GM12878 (cell line): ENCODE measurements at regions of chr6 and their contacts with region 1.

Region 1: GRCh38 chr6:159042003-159042825 is 2.6 kb downstream of the TAGAP start:
- DNase-seq: peak; percentile 69
- ATAC-seq: peak; percentile 53
- H3K4me3 ChIP-seq: 0 out of 2 replicates have a peak overlapping the region, but pooled peaks have one; percentile 60
- H3K27ac ChIP-seq: peak overlapping the region; percentile 59
- H3K4me1 ChIP-seq: peaks cover 43% of the 10 kb centered on the region
- H3K27me3 ChIP-seq: no peaks in the 10 kb centered on the region
- CTCF ChIP-seq: peak; percentile 94 to 99 (median 96)
- EP300 ChIP-seq: 0 out of 4 replicates have a peak, but pooled peaks of 1 of the 2 experiments have one; percentile 23
- POLR2A ChIP-seq: no peak
- RAD21 ChIP-seq: peak; percentile 92

Region 2: DNA sequence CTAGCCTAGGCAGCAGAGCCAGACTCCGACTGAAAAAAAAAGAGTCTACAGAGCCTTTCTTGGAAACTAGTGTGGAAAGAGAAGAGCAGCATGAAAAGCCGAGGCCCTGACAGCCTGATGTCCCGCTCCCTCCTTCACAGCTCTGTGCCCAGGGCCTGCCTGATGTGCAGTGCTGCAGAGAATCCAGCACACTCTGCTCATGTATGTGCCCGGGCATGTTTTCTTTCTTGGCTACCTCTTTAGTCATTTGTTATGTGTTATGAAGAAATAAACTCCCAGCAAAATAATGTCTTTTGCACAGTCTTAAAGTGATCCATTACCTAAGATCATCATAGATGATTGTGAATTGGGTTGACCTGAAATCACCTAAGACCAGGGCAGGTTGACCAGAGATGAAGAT is 145.0 kb before region 1 on chr6:
- CTCF ChIA-PET with region 1: no interaction called
- POLR2A ChIA-PET with region 1: no interaction called
- RAD21 ChIA-PET with region 1: no interaction called
- SMC1A ChIA-PET with region 1: no interaction called
- in situ Hi-C with region 1: no loop called
- intact Hi-C with region 1: no loop called
- DNase-seq: no peak
- ATAC-seq: no peak
- H3K4me3 ChIP-seq: no peak overlapping the region
- H3K27ac ChIP-seq: no peak overlapping the region
- H3K4me1 ChIP-seq: no peaks in the 10 kb centered on the region
- H3K27me3 ChIP-seq: no peaks in the 10 kb centered on the region
- CTCF ChIP-seq: no peak
- EP300 ChIP-seq: no peak
- POLR2A ChIP-seq: no peak
- RAD21 ChIP-seq: no peak

Region 3: DNA sequence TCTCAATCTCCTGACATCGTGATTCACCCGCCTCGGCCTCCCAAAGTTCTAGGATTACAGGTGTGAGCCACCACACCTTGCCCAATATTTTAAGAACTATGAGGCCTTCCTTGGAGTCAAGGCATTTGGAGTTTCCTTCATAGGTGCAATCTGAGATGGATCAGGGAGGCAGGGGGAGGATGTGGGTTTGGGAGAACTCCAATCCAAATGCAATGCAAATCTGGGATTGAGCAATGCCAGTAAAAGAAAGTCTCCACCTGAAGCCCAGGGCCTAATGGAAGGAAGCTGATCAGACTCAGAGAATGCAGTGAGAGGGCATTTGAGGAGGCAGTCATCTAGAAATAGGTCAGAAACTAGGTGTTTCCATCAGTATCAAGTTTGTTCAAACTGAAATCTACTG is 63.5 kb before region 1 on chr6:
- CTCF ChIA-PET with region 1: no interaction called
- POLR2A ChIA-PET with region 1: no interaction called
- RAD21 ChIA-PET with region 1: no interaction called
- SMC1A ChIA-PET with region 1: no interaction called
- in situ Hi-C with region 1: no loop called
- intact Hi-C with region 1: no loop called
- DNase-seq: no peak
- ATAC-seq: no peak
- H3K4me3 ChIP-seq: no peak overlapping the region
- H3K27ac ChIP-seq: no peak overlapping the region
- H3K4me1 ChIP-seq: no peaks in the 10 kb centered on the region
- H3K27me3 ChIP-seq: no peaks in the 10 kb centered on the region
- CTCF ChIP-seq: no peak
- EP300 ChIP-seq: no peak
- POLR2A ChIP-seq: no peak
- RAD21 ChIP-seq: no peak

Region 4: DNA sequence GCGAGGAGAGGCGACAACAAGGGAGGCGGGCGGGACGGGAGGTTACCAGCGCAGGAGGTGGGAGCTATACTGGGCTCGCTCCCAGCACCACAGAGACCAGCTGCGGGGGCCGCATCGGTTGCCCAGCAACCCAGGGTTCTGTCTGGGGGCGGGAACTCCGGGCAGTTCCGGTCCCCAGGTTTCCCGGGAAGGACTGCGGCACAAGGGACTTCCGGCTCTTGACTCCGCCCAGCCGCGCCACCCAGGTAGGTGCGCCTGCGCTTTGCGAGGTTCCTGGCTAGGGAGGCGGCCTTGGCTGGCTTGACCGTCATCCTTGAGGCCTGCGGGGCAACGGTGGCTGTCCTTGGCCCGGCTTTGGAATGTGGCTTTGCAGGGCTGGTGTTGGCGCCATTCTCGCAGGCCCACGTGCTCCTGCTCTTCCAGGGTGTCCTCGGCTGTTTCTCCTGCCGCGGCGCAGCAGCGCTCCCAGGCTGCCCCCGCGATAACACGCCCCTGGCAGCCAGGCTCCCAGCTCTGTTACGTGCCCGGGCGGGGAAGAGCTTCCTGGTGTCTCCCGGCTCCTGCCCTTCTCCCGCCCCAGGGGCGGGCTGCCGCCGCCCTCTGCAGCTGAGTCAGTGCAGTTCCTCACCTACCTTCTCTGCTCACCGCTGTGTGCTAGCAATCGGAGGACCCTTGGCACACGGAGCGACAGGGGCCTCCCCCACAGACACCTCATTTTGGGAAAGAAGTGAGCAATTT is 42.4 kb before region 1 on chr6 and contains the start of gene RSPH3:
- CTCF ChIA-PET with region 1: interaction called, 19 read pairs
- POLR2A ChIA-PET with region 1: interaction called, 14 read pairs
- RAD21 ChIA-PET with region 1: interaction called, 13 read pairs
- SMC1A ChIA-PET with region 1: interaction called, 9 read pairs
- in situ Hi-C with region 1: no loop called
- intact Hi-C with region 1: no loop called
- DNase-seq: peak; percentile 77
- ATAC-seq: peak; percentile 96
- H3K4me3 ChIP-seq: peak within 1 kb of the TSS; percentile 81
- H3K27ac ChIP-seq: peak within 1 kb of the TSS; percentile 87
- H3K4me1 ChIP-seq: peaks cover 3% of the 10 kb centered on the region; the same call in 1 of the 2 replicates
- H3K27me3 ChIP-seq: no peaks in the 10 kb centered on the region
- CTCF ChIP-seq: peak in 1 of 3 experiments; percentile 34; a peak in 2 of 6 replicates
- EP300 ChIP-seq: no peak
- POLR2A ChIP-seq: peak; percentile 98
- RAD21 ChIP-seq: peak; percentile 21; the same call in 1 of the 2 replicates
- polyA plus RNA-seq, gene RSPH3: 0.40 to 0.51 TPM

Region 5: DNA sequence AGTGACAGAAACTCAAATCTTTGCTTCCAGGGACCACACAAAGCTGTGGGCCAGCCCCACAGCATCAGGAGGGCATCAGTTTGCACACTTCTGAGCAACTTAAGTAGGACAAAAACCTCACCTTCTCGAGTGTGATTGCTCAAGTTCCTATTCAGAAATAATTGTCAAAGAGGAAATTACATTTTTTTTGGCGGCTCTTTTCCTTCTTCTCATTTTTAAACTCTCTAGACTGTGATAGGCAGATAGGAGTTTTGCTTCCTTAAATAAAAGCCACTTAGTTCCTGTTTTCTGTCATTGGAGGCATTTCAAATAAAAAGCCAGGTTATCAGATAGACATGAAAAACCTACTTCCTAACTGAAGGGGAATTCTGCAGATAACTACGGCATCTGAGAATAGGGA is 13.8 kb after region 1 on chr6:
- CTCF ChIA-PET with region 1: interaction called, 15 read pairs
- POLR2A ChIA-PET with region 1: interaction called, 22 read pairs
- RAD21 ChIA-PET with region 1: interaction called, 26 read pairs
- SMC1A ChIA-PET with region 1: interaction called, 24 read pairs
- in situ Hi-C with region 1: no loop called
- intact Hi-C with region 1: no loop called
- DNase-seq: no peak
- ATAC-seq: peak; percentile 66
- H3K4me3 ChIP-seq: no peak overlapping the region
- H3K27ac ChIP-seq: no peak overlapping the region
- H3K4me1 ChIP-seq: peaks cover 10% of the 10 kb centered on the region
- H3K27me3 ChIP-seq: no peaks in the 10 kb centered on the region
- CTCF ChIP-seq: no peak
- EP300 ChIP-seq: no peak
- POLR2A ChIP-seq: no peak
- RAD21 ChIP-seq: no peak

Region 6: DNA sequence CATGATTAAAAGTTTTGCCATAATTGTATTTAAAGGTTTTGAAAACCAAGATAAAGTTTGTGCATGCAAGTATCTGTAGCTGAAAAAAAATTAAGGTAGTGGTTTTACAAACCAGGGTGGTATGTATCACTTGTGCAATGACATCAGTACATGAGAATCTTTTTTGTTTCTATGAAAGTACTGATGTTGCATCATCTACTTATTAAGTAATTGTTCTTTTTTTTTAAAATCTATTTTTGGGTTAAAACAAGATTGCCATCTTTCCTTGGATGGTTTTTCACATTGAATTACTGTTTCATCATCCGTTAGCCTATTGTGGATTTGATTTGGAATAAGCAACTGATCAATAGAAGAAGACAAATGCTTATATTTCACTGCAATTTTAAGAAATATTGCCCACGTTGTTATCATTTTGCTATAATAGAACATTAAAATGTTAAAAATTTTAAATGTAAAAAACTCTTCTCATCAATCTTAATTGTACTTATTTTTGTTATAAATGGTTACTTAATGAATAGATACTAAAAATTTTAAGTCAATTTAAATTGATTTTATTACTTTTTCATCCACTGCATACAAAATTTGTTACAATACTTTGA is 42.4 kb after region 1 on chr6:
- CTCF ChIA-PET with region 1: interaction called, 16 read pairs
- POLR2A ChIA-PET with region 1: interaction called, 6 read pairs
- RAD21 ChIA-PET with region 1: interaction called, 18 read pairs
- SMC1A ChIA-PET with region 1: interaction called, 86 read pairs
- in situ Hi-C with region 1: no loop called
- intact Hi-C with region 1: no loop called
- DNase-seq: no peak
- ATAC-seq: peak; percentile 46; the same call in 2 of the 3 replicates
- H3K4me3 ChIP-seq: no peak overlapping the region
- H3K27ac ChIP-seq: no peak overlapping the region
- H3K4me1 ChIP-seq: peaks cover 4% of the 10 kb centered on the region; the same call in 1 of the 2 replicates
- H3K27me3 ChIP-seq: no peaks in the 10 kb centered on the region
- CTCF ChIP-seq: no peak
- EP300 ChIP-seq: no peak
- POLR2A ChIP-seq: no peak
- RAD21 ChIP-seq: no peak

Region 7: DNA sequence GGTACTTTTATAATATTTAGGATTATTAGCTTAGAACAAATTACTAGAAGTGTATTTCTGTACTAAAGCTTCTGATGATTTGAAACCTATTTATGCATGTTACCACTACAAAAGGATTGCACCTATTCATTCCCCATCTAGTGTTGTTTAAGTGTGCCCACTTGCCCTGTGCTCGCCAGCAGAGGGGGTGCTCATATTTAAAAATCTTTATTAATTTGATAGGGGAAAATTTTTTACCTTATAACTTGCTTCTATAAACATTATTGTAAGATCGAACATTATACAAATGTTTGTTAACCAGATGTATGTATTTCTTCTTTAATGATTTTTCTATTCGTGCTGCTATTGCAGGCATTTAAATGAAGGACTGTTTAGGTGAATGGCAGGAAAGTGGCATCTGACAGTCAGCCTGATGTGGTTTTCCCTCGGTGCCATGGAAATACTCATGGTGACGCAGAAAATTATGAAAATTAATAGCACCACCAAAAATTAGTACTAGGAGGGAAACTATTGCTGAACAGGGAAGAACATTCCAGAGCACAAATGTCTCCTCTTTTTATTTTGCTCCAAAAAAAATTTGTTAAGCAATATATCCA is 82.9 kb after region 1 on chr6:
- CTCF ChIA-PET with region 1: interaction called, 14 read pairs
- POLR2A ChIA-PET with region 1: interaction called, 17 read pairs
- RAD21 ChIA-PET with region 1: interaction called, 16 read pairs
- SMC1A ChIA-PET with region 1: interaction called, 28 read pairs
- in situ Hi-C with region 1: no loop called
- intact Hi-C with region 1: no loop called
- DNase-seq: no peak
- ATAC-seq: no peak
- H3K4me3 ChIP-seq: no peak overlapping the region
- H3K27ac ChIP-seq: no peak overlapping the region
- H3K4me1 ChIP-seq: peaks cover 19% of the 10 kb centered on the region
- H3K27me3 ChIP-seq: peaks cover 0 to 3% of the 10 kb centered on the region in 2 experiments; a peak in 1 of 4 replicates
- CTCF ChIP-seq: 0 out of 6 replicates have a peak, but pooled peaks of 2 of the 3 experiments have one; percentile 5 to 9
- EP300 ChIP-seq: no peak
- POLR2A ChIP-seq: no peak
- RAD21 ChIP-seq: 0 out of 2 replicates have a peak, but pooled peaks have one; percentile 2